Activated T-helper 1 cell treated with anti-CD3 and anti-CD28 coated beads, Interleukin-12 subunit alpha, Interleukin-12 subunit beta, Interleukin-2, Interleukin-4 antibody, amounts not matched to agents 30 ng/mL and 10 ng/mL and 1 ng/mL, durations not matched to agents 14 hours and 24 hours and 36 hours (primary cell): ENCODE measurements at regions of chr4 and their contacts with region 1.

Region 1: GRCh38 chr4:177309522-177310371 is at the start of gene NEIL3:
- DNase-seq: peak; percentile 88
- H3K4me3 Mint-ChIP-seq: peak within 1 kb of the TSS; percentile 96
- H3K27ac Mint-ChIP-seq: peak within 1 kb of the TSS; percentile 89
- H3K4me1 Mint-ChIP-seq: peaks cover 59% of the 10 kb centered on the region
- H3K27me3 Mint-ChIP-seq: no peaks in the 10 kb centered on the region
- total RNA-seq, gene NEIL3: 12.9 and 13.6 TPM in 2 replicates

Region 2: GRCh38 chr4:176319704-176320339 is 989.9 kb before region 1 on chr4 and contains the start of gene SPCS3:
- intact Hi-C with region 1: loop called (anchors 1 kb)
- DNase-seq: peak; percentile 92
- H3K4me3 Mint-ChIP-seq: peak within 1 kb of the TSS; percentile 98
- H3K27ac Mint-ChIP-seq: peak within 1 kb of the TSS; percentile 97
- H3K4me1 Mint-ChIP-seq: peaks cover 60% of the 10 kb centered on the region
- H3K27me3 Mint-ChIP-seq: no peaks in the 10 kb centered on the region
- total RNA-seq, gene SPCS3: 197 and 203 TPM in 2 replicates

Region 3: GRCh38 chr4:176357359-176358082 is 952.2 kb before region 1 on chr4:
- intact Hi-C with region 1: no loop called
- DNase-seq: no peak
- H3K4me3 Mint-ChIP-seq: no peak overlapping the region
- H3K27ac Mint-ChIP-seq: no peak overlapping the region
- H3K4me1 Mint-ChIP-seq: no peaks in the 10 kb centered on the region
- H3K27me3 Mint-ChIP-seq: no peaks in the 10 kb centered on the region

Region 4: GRCh38 chr4:176902710-176903323 is 406.9 kb before region 1 on chr4:
- intact Hi-C with region 1: loop called (anchors 1 kb)
- DNase-seq: no peak
- H3K4me3 Mint-ChIP-seq: no peak overlapping the region
- H3K27ac Mint-ChIP-seq: peak overlapping the region; percentile 29
- H3K4me1 Mint-ChIP-seq: peaks cover 13% of the 10 kb centered on the region
- H3K27me3 Mint-ChIP-seq: peaks cover 3% of the 10 kb centered on the region

Region 5: DNA sequence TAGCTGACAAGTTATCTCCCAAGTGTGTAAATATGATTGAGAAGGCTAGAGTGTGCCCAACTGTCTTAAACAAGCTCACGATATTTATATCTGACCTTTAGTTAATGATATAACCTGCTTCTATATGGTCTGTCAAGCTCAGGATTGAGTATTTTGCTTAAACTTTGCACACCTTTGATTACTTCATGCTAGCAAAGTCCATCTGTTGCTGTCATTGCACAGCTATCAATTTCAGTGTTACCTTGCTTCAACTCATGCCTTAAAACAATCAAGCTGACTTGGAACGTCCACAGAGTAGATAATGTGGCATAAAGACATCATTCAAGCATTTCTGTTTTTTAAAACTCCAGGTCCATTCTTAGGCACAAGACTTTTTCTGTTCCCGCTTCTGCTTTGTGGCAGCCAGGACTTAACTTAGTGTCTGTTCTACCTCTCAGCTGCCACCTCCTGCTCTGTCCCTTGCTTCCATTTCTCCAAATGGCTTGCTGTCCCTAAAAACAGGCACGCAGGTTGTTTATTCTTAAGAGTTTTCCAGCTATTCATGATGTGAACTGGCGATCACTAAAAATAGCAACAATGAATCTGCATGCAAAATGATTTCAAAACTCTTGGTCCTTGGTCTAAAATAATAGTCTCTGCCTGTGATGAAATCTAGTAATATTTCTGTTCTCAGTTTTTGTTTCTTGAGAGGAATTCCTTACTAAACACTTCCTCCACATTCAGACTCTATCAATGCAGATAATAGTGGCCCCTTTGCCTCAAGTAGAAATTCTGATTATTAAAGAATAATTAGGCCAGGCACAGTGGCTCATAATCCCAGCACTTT is 16.3 kb before region 1 on chr4:
- intact Hi-C with region 1: loop called (anchors 2 kb)
- DNase-seq: no peak
- H3K4me3 Mint-ChIP-seq: no peak overlapping the region
- H3K27ac Mint-ChIP-seq: no peak overlapping the region
- H3K4me1 Mint-ChIP-seq: no peaks in the 10 kb centered on the region
- H3K27me3 Mint-ChIP-seq: peaks cover 6% of the 10 kb centered on the region

Region 6: GRCh38 chr4:177332119-177332518 is 22.4 kb after region 1 on chr4:
- intact Hi-C with region 1: loop called (anchors 1 kb)
- DNase-seq: no peak
- H3K4me3 Mint-ChIP-seq: no peak overlapping the region
- H3K27ac Mint-ChIP-seq: no peak overlapping the region
- H3K4me1 Mint-ChIP-seq: peaks cover 60% of the 10 kb centered on the region
- H3K27me3 Mint-ChIP-seq: no peaks in the 10 kb centered on the region

Region 7: GRCh38 chr4:177401658-177402273 is 92.0 kb after region 1 on chr4:
- intact Hi-C with region 1: loop called (anchors 5 kb)
- DNase-seq: no peak
- H3K4me3 Mint-ChIP-seq: peak overlapping the region; percentile 35
- H3K27ac Mint-ChIP-seq: peak overlapping the region; percentile 15
- H3K4me1 Mint-ChIP-seq: peaks cover 50% of the 10 kb centered on the region
- H3K27me3 Mint-ChIP-seq: peaks cover 4% of the 10 kb centered on the region

Region 8: DNA sequence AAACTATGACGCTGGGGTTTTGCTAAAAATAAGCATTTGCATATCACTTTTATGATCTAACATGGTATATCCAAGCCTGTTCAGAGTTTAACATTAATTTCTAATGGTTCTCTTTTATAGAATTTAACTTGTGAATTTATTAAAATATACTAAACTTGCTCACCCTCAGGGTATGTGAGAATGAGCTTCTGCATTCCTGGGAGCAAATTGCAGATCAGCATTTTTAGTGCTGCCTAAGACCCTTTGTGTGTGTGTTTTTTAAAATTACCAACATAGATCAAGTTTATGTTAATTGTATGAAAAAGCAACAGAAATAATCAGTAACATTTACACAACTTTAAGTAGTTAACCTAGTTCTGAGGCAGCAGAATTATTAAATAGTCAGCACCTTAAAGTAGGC is 350.5 kb after region 1 on chr4:
- intact Hi-C with region 1: no loop called
- DNase-seq: no peak
- H3K4me3 Mint-ChIP-seq: no peak overlapping the region
- H3K27ac Mint-ChIP-seq: no peak overlapping the region
- H3K4me1 Mint-ChIP-seq: no peaks in the 10 kb centered on the region
- H3K27me3 Mint-ChIP-seq: peaks cover 3% of the 10 kb centered on the region